GM13976 (cell line): ENCODE measurements at regions of chr14 and their contacts with region 1.

Region 1: DNA sequence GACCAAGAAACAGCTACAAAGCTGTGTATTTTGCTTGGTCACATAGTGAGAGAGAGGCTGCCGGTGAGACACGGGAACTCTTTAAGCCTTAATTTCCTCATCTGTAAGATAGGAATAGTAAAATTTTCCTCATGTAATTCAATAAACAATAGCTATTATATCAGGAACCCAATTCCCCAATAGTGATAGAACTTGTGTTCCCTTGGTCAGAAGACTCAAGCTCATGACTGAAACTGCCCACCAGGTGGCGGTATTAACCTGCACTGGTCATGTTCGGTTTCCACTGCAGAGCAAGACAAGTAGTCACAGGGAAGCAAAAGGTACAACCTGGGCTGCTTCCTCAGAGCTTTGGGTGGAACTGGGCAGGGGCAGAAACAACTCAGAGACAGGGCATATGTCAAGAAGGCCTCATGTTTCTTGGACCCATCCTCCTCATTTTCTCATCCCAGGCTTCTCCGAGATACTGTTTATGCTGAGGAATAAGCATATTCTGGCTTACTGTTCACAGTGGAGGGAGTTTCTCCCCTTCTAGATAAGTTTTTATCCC is 4.2 kb upstream of the AJUBA start:
- DNase-seq: peak; percentile 87
- CTCF ChIP-seq: peak; percentile 83

Region 2: GRCh38 chr14:23054000-23054811 is 67.6 kb after region 1 on chr14:
- in situ Hi-C with region 1: loop called (anchors 5 kb)
- DNase-seq: peak; percentile 67
- CTCF ChIP-seq: peak; percentile 32

Region 3: GRCh38 chr14:23351681-23352510 is 365.3 kb after region 1 on chr14:
- in situ Hi-C with region 1: no loop called
- DNase-seq: peak; percentile 46
- CTCF ChIP-seq: no peak